ENCODE measurements at regions of chr10 and their contacts with region 1.

Region 1: DNA sequence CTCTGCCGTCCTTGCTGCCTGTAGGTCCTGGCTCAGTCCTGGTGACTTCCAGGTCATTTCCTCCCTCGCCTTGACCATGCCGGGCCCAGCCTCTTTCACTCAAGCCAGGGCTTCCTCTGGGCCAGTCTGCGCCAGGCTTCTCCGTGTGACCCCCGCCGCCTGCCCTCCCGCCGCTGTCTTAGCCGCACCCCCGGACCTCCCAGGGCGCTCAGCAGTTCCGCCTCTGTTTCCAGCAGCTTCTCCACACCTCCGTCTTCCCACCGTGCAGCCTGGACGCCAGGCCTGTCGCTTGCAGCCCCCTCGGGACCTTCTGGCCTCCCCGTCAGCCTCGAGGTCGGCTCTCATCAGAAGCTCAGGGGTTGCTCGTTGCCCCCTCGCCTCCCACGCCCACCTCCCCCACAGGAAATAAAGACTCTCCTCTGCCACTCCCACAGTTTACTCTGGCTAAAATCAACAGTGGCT is 123.0 kb upstream of the FZD8 start:
- DNase-seq: peak in 2 of 4 experiments; percentile 12 to 20
- ATAC-seq: peak; percentile 85
- H3K4me3 ChIP-seq: 0 out of 2 replicates have a peak overlapping the region, but pooled peaks have one; percentile 4
- H3K27ac ChIP-seq: no peak overlapping the region
- H3K4me1 ChIP-seq: peaks cover 0 to 6% of the 10 kb centered on the region in 2 experiments; a peak in 2 of 5 replicates
- H3K27me3 ChIP-seq: no peaks in the 10 kb centered on the region
- CTCF ChIP-seq: no peak
- EP300 ChIP-seq: no peak
- POLR2A ChIP-seq: no peak
- RAD21 ChIP-seq: no peak

Region 2: DNA sequence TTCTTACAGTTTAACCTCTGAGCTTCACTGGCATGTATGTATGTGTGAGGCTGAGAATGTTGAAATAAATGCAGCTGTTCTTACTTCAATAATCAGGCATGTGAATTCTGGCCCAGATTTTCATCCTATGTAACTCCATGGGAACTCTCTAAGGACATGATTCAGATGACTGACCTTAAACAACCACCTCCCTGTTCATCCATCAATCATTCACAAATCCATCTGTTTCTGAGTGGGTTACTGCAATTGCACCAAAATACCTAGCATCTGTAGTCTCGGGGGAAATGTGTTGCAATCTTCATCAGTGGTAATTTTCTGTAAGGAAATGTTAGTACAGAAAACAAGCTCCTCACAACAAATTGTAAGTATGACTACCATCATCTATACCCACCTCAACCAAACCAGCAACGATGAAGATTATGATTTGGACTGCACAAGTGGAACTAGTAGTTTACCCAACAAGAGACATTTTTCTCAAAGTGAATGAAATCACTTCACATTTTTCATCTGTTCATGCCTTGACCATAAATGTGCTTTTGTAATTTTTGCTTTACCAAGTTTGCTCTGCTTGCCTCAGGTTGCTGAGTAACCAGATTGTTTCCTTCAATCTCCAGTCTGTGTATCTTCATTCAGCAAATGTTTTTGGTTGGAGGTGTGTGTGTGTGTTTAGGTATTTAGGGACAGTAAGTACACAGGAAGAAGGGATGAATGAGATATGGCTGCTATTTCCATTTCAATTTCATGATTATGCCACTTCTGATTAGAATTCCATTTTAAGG is 57.3 kb before region 1 on chr10:
- CTCF ChIA-PET with region 1: no interaction called
- POLR2A ChIA-PET with region 1: no interaction called
- in situ Hi-C with region 1: no loop called
- intact Hi-C with region 1: loop called (anchors 10 kb)
- DNase-seq: no peak
- ATAC-seq: no peak
- H3K4me3 ChIP-seq: no peak overlapping the region
- H3K27ac ChIP-seq: no peak overlapping the region
- H3K4me1 ChIP-seq: no peaks in the 10 kb centered on the region
- H3K27me3 ChIP-seq: peaks cover 0 to 3% of the 10 kb centered on the region in 2 experiments; a peak in 1 of 5 replicates
- CTCF ChIP-seq: no peak
- EP300 ChIP-seq: no peak
- POLR2A ChIP-seq: no peak
- RAD21 ChIP-seq: no peak